K562 (cell line): ENCODE measurements at regions of chr12 and their contacts with region 1.

Region 1: GRCh38 chr12:127025545-127025944 is 1241.4 kb upstream of the TMEM132C start:
- DNase-seq: peak in 3 of 4 experiments; percentile 11 to 18 (median 12)
- ATAC-seq: peak; percentile 76
- H3K4me3 ChIP-seq: no peak overlapping the region
- H3K27ac ChIP-seq: no peak overlapping the region
- H3K4me1 ChIP-seq: no peaks in the 10 kb centered on the region; a peak in 1 of 5 replicates
- H3K27me3 ChIP-seq: no peaks in the 10 kb centered on the region
- CTCF ChIP-seq: peak; percentile 26 to 53 (median 28); a peak in 3 of 6 replicates
- EP300 ChIP-seq: no peak
- POLR2A ChIP-seq: no peak
- RAD21 ChIP-seq: peak; percentile 15 to 64; a peak in 3 of 4 replicates

Region 2: DNA sequence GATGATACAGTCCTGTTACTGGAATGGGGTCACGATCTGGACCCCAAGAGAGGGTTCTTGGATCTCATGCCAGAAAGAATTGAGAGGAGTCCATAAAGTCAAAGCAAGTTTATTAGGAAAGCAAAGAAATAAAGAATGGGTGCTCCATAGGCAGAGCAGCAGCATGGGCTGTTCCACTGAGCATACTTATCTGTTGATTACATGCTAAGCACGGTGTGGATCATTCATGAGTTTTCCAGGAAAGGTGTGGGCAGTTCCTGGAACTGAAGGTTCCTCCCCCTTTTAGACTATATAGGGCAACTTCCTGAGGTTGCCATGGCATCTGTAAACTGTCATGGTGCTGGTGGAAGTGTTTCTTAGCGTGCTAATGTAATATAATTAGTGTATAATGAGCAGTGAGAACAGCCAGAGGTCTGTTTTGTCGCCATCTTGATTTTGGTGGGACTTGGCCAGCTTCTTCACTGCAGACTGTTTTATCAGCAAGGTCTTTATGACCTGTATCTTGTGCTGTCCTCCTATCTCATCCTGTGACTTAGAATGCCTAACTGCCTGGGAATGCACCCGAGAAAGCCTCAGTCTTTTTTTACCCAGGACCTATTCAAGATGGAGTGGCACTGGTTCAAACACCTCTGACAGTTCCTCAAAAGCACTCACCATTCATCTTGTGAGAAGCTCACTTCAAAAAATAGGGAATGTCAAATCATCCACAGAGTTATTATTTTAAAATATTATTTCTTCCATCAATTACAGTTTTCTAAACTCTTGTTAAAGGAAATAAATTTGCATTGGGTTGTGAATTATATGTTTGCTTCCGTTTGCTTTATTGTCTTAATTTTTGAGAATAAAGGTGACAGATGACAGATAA is 117.4 kb before region 1 on chr12:
- CTCF ChIA-PET with region 1: no interaction called
- POLR2A ChIA-PET with region 1: no interaction called
- in situ Hi-C with region 1: no loop called
- intact Hi-C with region 1: no loop called
- DNase-seq: peak; percentile 64 to 98 (median 68)
- ATAC-seq: peak; percentile 86
- H3K4me3 ChIP-seq: no peak overlapping the region
- H3K27ac ChIP-seq: peak overlapping the region; percentile 89
- H3K4me1 ChIP-seq: peaks cover 30 to 65% of the 10 kb centered on the region in 2 experiments
- H3K27me3 ChIP-seq: no peaks in the 10 kb centered on the region
- CTCF ChIP-seq: no peak
- EP300 ChIP-seq: peak; percentile 93
- POLR2A ChIP-seq: peak; percentile 69
- RAD21 ChIP-seq: peak in 1 of 2 experiments; percentile 51; a peak in 2 of 4 replicates

Region 3: DNA sequence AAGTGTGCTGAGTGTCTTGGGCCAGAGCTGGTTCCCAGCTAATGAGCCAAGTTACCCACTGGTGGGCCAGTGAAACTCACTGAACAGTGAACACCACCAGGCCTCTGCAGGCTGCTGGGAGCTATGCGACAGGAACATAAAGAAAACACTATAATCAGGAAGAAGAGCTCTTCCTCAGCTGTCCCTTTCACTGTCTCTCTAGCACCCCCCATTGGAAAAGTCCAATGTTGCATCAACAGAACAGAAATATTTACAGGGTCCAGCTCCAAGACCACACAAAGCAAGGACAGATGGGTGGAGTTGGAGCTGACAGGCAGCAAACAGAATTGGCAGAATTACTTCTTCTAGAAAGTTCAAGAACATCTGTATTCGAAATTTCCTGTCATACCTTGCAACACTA is 337.8 kb after region 1 on chr12:
- CTCF ChIA-PET with region 1: no interaction called
- POLR2A ChIA-PET with region 1: no interaction called
- in situ Hi-C with region 1: no loop called
- intact Hi-C with region 1: loop called (anchors 10 kb)
- DNase-seq: peak in 2 of 4 experiments; percentile 20 to 47
- ATAC-seq: peak; percentile 87
- H3K4me3 ChIP-seq: no peak overlapping the region
- H3K27ac ChIP-seq: no peak overlapping the region
- H3K4me1 ChIP-seq: no peaks in the 10 kb centered on the region
- H3K27me3 ChIP-seq: no peaks in the 10 kb centered on the region
- CTCF ChIP-seq: peak; percentile 58 to 70 (median 65)
- EP300 ChIP-seq: no peak
- POLR2A ChIP-seq: no peak
- RAD21 ChIP-seq: peak; percentile 9 to 53; a peak in 2 of 4 replicates